Mammary epithelial cell (primary cell): ENCODE measurements at regions of chr4 and their contacts with region 1.

Region 1: GRCh38 chr4:48315728-48316630 is 25.4 kb upstream of the SLAIN2 start:
- DNase-seq: peak; percentile 54
- H3K4me3 ChIP-seq: no peak overlapping the region
- H3K27ac ChIP-seq: no peak overlapping the region
- H3K4me1 ChIP-seq: peaks cover 2% of the 10 kb centered on the region
- H3K27me3 ChIP-seq: no peaks in the 10 kb centered on the region
- CTCF ChIP-seq: peak; percentile 74 to 79

Region 2: DNA sequence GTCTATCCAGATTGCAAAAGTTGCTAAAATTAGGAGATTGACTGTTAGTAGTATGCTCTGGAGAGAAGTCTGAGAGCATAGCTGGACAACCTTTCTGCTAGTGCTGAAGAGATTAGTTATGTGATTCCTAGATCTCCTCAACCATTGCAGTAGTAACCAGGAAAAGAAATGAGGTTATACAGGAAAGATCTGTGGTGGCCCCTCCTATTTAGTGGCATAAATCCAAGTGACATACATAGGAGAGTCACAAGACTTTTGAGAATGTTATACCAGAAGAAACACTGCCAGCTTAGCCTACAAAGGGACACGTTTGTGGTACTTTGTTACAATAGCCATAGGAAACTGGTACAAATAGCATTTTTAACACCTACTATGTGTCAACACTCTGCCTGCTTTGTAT is 725.7 kb before region 1 on chr4:
- CTCF ChIA-PET with region 1: no interaction called
- dilution Hi-C with region 1: no loop called
- in situ Hi-C with region 1: no loop called
- intact Hi-C with region 1: no loop called
- DNase-seq: no peak
- H3K4me3 ChIP-seq: no peak overlapping the region
- H3K27ac ChIP-seq: no peak overlapping the region
- H3K4me1 ChIP-seq: no peaks in the 10 kb centered on the region
- H3K27me3 ChIP-seq: no peaks in the 10 kb centered on the region
- CTCF ChIP-seq: no peak

Region 3: GRCh38 chr4:48340965-48341775 is 25.2 kb after region 1 on chr4 and contains the start of gene SLAIN2:
- CTCF ChIA-PET with region 1: interaction called, 4 read pairs
- dilution Hi-C with region 1: no loop called
- in situ Hi-C with region 1: no loop called
- intact Hi-C with region 1: loop called (anchors 1 kb)
- DNase-seq: peak; percentile 95
- H3K4me3 ChIP-seq: peak within 1 kb of the TSS; percentile 75 to 96 (median 88)
- H3K27ac ChIP-seq: peak within 1 kb of the TSS; percentile 84
- H3K4me1 ChIP-seq: peaks cover 56% of the 10 kb centered on the region
- H3K27me3 ChIP-seq: no peaks in the 10 kb centered on the region
- CTCF ChIP-seq: peak in 1 of 2 donors; percentile 37
- total RNA-seq, gene SLAIN2: 79.9 to 95.9 TPM

Region 4: DNA sequence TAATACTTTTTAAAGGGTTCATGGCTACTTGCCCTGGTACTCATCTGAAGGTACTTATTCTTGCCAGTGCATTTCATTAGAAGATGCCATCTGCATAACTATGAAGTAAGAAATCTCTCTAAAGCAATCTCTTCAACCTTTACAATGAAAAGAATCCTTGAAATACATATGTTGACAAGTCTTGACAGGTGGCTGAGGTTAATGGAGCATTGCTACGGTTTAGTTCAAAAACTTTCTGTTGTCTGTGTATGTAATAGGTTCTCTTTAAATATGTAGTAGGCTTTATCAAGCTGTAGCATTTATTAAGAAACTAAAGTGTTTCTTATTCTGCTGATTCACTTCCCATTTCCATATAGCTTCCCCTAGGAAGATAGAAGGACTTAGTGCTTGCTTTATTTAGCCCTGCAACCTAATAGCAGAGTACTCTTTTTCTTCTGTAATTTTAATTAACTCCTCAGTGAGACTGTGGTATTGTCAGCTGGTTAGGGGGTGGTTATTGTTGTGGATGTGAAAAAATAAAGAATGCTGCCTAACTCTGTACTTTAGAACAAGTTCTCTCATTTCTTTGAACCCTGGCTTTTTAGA is 64.7 kb after region 1 on chr4:
- CTCF ChIA-PET with region 1: no interaction called
- dilution Hi-C with region 1: no loop called
- in situ Hi-C with region 1: no loop called
- intact Hi-C with region 1: loop called (anchors 2 kb)
- DNase-seq: peak; percentile 73
- H3K4me3 ChIP-seq: no peak overlapping the region
- H3K27ac ChIP-seq: peak overlapping the region; percentile 43
- H3K4me1 ChIP-seq: peaks cover 23% of the 10 kb centered on the region
- H3K27me3 ChIP-seq: no peaks in the 10 kb centered on the region
- CTCF ChIP-seq: no peak

Region 5: GRCh38 chr4:48431401-48431800 is 115.4 kb after region 1 on chr4:
- CTCF ChIA-PET with region 1: no interaction called
- dilution Hi-C with region 1: no loop called
- in situ Hi-C with region 1: no loop called
- intact Hi-C with region 1: loop called (anchors 5 kb)
- DNase-seq: no peak
- H3K4me3 ChIP-seq: no peak overlapping the region
- H3K27ac ChIP-seq: no peak overlapping the region
- H3K4me1 ChIP-seq: peaks cover 7% of the 10 kb centered on the region
- H3K27me3 ChIP-seq: no peaks in the 10 kb centered on the region
- CTCF ChIP-seq: no peak

Region 6: GRCh38 chr4:48483006-48483776 is 167.2 kb after region 1 on chr4 and contains the start of gene SLC10A4:
- CTCF ChIA-PET with region 1: no interaction called
- dilution Hi-C with region 1: no loop called
- in situ Hi-C with region 1: loop called in 1 of 2 experiments (anchors 25 kb)
- intact Hi-C with region 1: no loop called
- DNase-seq: no peak
- H3K4me3 ChIP-seq: no peak within 1 kb of the TSS
- H3K27ac ChIP-seq: no peak within 1 kb of the TSS
- H3K4me1 ChIP-seq: peaks cover 6% of the 10 kb centered on the region
- H3K27me3 ChIP-seq: peaks cover 34% of the 10 kb centered on the region
- CTCF ChIP-seq: no peak
- total RNA-seq, gene SLC10A4: 0.17 to 0.21 TPM

Region 7: GRCh38 chr4:48499551-48500066 is 183.6 kb after region 1 on chr4:
- CTCF ChIA-PET with region 1: no interaction called
- dilution Hi-C with region 1: no loop called
- in situ Hi-C with region 1: loop called in 1 of 2 experiments (anchors 25 kb)
- intact Hi-C with region 1: loop called (anchors 5 kb)
- DNase-seq: no peak
- H3K4me3 ChIP-seq: no peak overlapping the region
- H3K27ac ChIP-seq: no peak overlapping the region
- H3K4me1 ChIP-seq: no peaks in the 10 kb centered on the region
- H3K27me3 ChIP-seq: no peaks in the 10 kb centered on the region
- CTCF ChIP-seq: no peak

Region 8: DNA sequence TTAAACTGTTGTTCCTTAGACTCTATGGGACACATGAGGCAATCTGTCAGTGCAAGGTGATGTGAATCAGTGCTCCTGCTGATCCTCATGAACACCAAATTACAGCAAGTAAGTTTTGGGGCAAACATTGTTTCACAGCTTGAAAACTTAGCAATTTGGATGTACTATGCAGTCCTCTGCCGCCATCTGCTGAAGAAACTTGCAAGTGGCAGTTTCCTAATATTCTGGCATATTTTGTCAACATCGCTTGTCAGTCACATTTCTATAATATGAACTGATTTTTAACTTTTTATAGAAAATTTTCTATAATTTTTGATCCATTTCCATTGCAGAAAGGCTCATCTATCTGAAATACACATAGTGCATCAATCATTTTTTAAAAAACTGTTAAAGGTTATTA is 230.4 kb after region 1 on chr4:
- CTCF ChIA-PET with region 1: no interaction called
- dilution Hi-C with region 1: no loop called
- in situ Hi-C with region 1: no loop called
- intact Hi-C with region 1: loop called (anchors 2 kb)
- DNase-seq: peak; percentile 3
- H3K4me3 ChIP-seq: no peak overlapping the region
- H3K27ac ChIP-seq: no peak overlapping the region
- H3K4me1 ChIP-seq: no peaks in the 10 kb centered on the region
- H3K27me3 ChIP-seq: no peaks in the 10 kb centered on the region
- CTCF ChIP-seq: peak; percentile 45 to 52